BJ (cell line): ENCODE measurements at regions of chr12 and their contacts with region 1.

Region 1: GRCh38 chr12:88052686-88053085 is 23.5 kb upstream of the C12orf50 start:
- DNase-seq: no peak
- H3K4me3 ChIP-seq: no peak overlapping the region
- H3K27me3 ChIP-seq: no peaks in the 10 kb centered on the region
- CTCF ChIP-seq: peak; percentile 59

Region 2: DNA sequence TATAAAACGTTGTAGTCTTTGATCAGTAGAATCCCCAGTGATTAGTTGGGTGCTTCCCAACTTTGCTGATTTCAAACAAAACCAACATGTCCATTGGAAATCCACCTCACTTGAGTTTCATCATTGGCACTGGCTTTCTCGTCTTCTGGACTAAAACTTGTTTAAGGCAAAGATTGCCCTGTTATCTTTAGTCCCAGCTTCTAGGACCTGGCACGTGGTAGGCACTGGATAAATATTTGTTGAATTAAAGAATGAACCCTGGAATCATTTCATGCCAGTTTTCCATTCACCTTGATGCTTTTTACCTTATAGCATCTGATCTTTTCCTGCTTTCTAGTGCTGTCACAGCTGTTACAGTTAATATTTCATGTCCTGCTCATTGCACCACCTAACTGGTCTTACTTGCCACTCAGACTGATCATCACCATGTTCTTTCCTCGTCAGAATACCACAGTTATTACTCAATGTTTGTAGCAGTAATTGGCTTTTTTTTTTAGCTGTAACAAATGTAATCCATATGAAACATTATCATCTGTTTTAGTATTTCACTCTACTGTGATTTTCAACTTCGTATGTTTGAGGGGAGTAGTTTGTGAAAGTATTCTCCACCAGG is 16.2 kb before region 1 on chr12:
- CTCF ChIA-PET with region 1: interaction called, 11 read pairs
- POLR2A ChIA-PET with region 1: no interaction called
- DNase-seq: no peak
- H3K4me3 ChIP-seq: peak overlapping the region; percentile 77
- H3K27me3 ChIP-seq: no peaks in the 10 kb centered on the region
- CTCF ChIP-seq: no peak

Region 3: DNA sequence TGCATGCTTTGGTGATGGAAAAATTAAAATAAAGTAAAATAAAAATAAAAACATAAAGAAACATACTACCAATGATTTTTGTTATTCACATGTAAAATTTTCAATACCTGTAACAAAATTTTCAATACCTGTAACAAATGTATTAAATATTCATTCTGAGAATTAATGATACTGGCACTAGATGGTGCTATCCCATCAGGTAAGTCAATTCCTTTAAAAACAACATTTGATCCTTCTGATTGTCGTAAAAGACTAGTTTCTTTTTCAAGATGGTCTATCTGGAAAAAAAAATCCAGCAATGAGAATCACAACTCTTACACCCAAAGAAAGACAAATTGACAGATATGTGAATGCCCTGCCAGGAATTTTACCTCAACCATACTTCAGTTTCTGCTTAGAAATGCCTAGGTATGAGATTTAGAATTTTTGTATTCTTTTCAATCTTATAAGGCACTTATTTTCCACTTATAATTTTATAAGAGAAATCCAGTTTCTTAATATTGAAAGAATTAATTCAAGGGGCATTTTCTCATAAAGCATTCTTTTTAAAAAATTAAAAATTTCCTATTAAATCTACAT is 58.5 kb after region 1 on chr12:
- CTCF ChIA-PET with region 1: no interaction called
- POLR2A ChIA-PET with region 1: no interaction called
- DNase-seq: peak; percentile 15
- H3K4me3 ChIP-seq: no peak overlapping the region
- H3K27me3 ChIP-seq: no peaks in the 10 kb centered on the region
- CTCF ChIP-seq: peak; percentile 39